ENCODE measurements at regions of chr17 and their contacts with region 1.

Region 1: DNA sequence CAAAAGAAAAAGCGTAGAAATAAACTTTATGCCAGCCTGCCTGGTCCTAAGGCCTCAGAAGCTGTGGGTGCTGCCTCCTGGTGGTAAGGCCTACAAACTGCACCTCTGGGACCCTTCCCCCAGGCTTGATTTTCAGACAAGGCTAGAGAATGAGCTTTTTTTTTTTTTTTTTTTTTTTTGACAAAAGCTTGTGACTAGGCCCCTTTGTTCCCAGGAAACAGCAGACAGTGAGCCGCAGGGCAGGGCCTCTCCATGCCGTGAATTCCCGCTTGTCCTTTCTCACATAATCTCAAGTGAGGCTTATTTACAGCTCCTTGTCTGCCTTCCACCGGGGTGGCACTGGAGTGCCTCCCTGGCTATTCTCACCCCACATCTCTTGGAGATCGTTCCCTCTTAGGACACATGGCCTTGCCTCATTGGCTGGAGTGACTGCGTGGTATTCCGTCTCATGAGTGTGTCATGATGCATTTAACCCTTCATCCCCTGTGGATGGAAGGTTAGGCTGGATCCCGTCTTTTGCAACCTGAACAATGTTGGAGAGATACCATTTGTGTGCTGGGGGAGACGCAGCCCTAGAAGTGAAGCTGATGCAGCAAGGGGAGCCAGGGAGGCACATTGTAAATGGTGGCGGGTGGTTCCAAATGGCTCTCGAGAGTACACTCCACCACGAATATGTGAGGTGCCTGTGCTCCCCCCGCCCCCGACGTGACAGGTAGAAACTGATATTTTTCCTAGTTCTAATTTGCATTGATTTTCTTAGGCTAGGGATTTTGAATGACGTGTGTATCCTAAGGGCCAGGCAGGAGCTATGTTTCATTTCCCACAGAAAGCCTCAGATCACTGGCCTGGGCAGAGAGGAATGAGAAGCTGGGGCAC is 49.6 kb downstream of the USP22 start:
- DNase-seq: peak in 2 of 3 donors; percentile 82 to 85
- ATAC-seq: peak; percentile 22 to 53
- H3K4me3 ChIP-seq: no peak overlapping the region
- H3K27ac ChIP-seq: no peak overlapping the region
- H3K4me1 ChIP-seq: no peaks in the 10 kb centered on the region
- H3K27me3 ChIP-seq: no peaks in the 10 kb centered on the region

Region 2: GRCh38 chr17:20226814-20227482 is 766.3 kb before region 1 on chr17:
- intact Hi-C with region 1: loop called in 1 of 4 experiments (anchors 5 kb)
- DNase-seq: peak; percentile 82 to 95 (median 93)
- ATAC-seq: peak; percentile 97 to 98
- H3K4me3 ChIP-seq: no peak overlapping the region
- H3K27ac ChIP-seq: no peak overlapping the region
- H3K4me1 ChIP-seq: no peaks in the 10 kb centered on the region
- H3K27me3 ChIP-seq: no peaks in the 10 kb centered on the region

Region 3: GRCh38 chr17:20916383-20916782 is 76.8 kb before region 1 on chr17:
- intact Hi-C with region 1: loop called in 1 of 4 experiments (anchors 10 kb)
- DNase-seq: no peak
- ATAC-seq: no peak
- H3K4me3 ChIP-seq: peak overlapping the region; percentile 41
- H3K27ac ChIP-seq: no peak overlapping the region
- H3K4me1 ChIP-seq: no peaks in the 10 kb centered on the region
- H3K27me3 ChIP-seq: no peaks in the 10 kb centered on the region

Region 4: DNA sequence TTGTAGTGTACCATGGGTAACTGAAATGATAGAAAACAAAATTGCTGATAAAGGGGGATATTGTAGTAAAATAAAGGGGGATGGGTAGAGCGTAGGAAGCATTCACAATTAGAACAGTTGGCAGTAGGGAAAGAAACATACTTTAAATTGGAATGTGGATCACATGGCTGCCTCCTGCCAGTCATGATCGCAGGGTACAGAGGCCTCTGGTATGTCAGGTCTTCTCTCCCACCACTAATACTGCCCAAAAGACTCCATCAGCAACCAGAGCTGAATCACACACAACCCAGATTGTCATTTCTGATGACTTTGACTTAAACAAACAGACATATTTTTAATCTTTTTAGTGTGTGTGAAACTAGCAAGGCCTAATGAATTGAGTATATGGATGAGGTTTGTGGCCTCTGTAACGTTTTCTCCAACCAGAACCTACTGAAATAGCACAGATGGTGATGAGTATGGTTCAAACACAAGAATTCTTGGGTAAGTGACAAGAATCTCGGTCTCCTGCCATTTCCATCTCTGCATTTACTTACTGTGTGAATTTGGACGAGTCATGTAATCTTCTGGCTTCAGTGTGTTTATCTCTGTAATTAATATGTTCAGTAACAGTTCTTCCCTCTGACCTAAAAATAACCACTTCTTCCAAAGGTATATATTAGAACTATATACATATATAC is 63.0 kb before region 1 on chr17:
- intact Hi-C with region 1: loop called in 1 of 4 experiments (anchors 5 kb)
- DNase-seq: no peak
- ATAC-seq: no peak
- H3K4me3 ChIP-seq: no peak overlapping the region
- H3K27ac ChIP-seq: no peak overlapping the region
- H3K4me1 ChIP-seq: no peaks in the 10 kb centered on the region
- H3K27me3 ChIP-seq: no peaks in the 10 kb centered on the region

Region 5: DNA sequence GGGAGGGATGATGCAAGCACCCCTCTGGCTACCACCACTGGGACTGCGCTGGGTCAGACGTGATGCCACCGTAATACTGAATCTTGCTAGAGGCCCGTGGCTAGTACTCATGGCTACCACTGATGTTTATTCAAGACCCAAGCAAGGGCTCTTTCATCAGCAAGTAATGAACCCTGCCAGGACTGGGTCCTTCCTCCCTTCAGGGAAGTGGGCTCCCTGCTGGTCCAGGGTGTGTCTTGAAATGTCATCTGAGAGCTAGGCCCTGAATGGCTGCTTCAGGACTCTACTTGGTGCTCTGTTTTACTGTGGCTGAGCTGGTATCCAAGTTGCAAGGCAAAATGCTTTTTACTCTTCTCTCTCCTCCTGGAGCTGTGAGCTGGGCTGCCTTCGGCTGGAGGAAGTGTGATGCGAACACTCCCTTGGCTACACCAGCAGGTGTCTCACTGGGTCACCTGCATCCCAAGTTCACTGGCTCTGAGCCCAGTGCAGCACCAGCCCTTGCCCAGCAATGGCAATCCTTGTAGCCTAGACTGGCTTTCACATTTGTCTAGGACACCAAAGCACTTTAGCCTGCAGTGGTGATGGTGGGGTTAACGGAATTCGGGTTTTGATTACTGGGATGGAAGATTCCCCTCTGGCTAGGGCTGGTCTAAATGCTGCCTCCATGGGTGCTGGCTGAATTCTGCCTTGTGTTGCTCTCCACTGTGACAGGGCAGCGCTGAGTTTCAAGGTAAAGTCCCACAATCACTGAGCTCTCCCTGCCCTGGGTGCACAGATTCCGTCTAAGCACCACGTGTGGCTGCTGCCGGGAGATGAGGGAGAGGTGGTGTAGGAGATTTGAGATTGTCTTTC is 49.0 kb before region 1 on chr17:
- intact Hi-C with region 1: no loop called
- DNase-seq: no peak
- ATAC-seq: no peak
- H3K4me3 ChIP-seq: no peak overlapping the region
- H3K27ac ChIP-seq: no peak overlapping the region
- H3K4me1 ChIP-seq: no peaks in the 10 kb centered on the region
- H3K27me3 ChIP-seq: no peaks in the 10 kb centered on the region

Measured in right cardiac atrium (tissue), 5 donors.